Esophagus muscularis mucosa (tissue), 4 donors: ENCODE measurements at regions of chr16 and their contacts with region 1.

Region 1: GRCh38 chr16:9047686-9048301 is 43.6 kb upstream of the HAPSTR1 start:
- DNase-seq: peak; percentile 96
- H3K4me3 ChIP-seq: no peak overlapping the region
- H3K27ac ChIP-seq: peak overlapping the region; percentile 50 to 81 (median 72)
- H3K4me1 ChIP-seq: peaks cover 14 to 17% (median 15%) of the 10 kb centered on the region in 4 donors
- H3K27me3 ChIP-seq: peaks cover 0 to 3% (median 0%) of the 10 kb centered on the region in 4 donors
- CTCF ChIP-seq: no peak
- EP300 ChIP-seq: no peak
- POLR2A ChIP-seq: no peak

Region 2: GRCh38 chr16:9031107-9031506 is 16.7 kb before region 1 on chr16:
- intact Hi-C with region 1: loop called (anchors 2 kb)
- DNase-seq: no peak
- H3K4me3 ChIP-seq: no peak overlapping the region
- H3K27ac ChIP-seq: no peak overlapping the region
- H3K4me1 ChIP-seq: no peaks in the 10 kb centered on the region
- H3K27me3 ChIP-seq: no peaks in the 10 kb centered on the region
- CTCF ChIP-seq: no peak
- EP300 ChIP-seq: no peak
- POLR2A ChIP-seq: no peak

Region 3: DNA sequence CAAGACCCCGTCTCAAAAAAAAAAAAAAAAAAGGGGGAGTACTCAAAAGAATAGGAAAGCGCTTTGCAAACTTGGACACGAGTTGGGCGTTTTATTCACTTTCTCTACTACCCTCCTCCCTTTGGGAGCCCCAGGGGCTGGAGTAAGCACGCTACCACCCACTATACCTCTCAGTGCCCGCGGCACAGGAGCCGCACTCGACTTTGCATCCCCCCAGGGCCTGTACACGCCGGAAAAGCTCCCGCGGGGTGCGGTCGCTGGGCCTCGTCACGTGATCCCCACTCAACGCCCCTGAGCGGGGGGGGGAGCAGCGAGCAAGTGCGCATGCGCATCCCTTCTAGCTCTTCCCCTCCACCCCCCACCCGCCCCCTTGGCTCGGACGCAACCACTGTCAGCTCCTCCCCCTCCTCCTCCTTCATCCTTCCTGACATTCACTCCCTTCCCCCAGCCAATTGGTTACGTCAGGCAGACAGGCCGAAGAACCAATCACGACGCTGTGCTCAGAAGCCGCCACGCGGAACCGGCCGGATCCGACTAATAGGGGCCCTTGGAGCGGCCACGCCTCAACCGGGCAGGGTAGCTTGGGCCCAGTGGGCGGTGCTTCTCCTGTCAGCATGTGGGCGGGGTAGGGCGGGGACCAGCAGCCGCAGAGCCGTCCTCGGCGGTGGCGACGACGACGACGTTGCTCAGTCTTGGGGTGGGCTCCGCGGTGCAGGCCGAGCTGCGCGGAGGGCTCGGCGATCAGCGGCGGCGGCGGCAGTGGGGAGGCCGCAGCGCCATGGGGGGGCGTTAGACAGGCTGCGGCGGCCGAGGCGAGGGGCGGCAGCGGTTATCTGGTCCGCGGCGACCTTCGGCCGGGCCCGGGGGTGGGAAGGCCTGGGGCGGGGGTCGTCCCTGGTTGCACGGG is 43.4 kb after region 1 on chr16 and contains the start of gene HAPSTR1:
- intact Hi-C with region 1: loop called (anchors 5 kb)
- DNase-seq: peak; percentile 100
- H3K4me3 ChIP-seq: peak within 1 kb of the TSS; percentile 75 to 100 (median 97)
- H3K27ac ChIP-seq: peak within 1 kb of the TSS; percentile 95 to 100 (median 98)
- H3K4me1 ChIP-seq: peaks cover 41 to 47% (median 45%) of the 10 kb centered on the region in 4 donors
- H3K27me3 ChIP-seq: no peaks in the 10 kb centered on the region
- CTCF ChIP-seq: no peak
- EP300 ChIP-seq: no peak
- POLR2A ChIP-seq: peak; percentile 99
- total RNA-seq, gene HAPSTR1: 51.7 to 65.2 (median 57.1) TPM